ENCODE measurements at regions of chr7 and their contacts with region 1.

Region 1: GRCh38 chr7:115116773-115117715 is 195.2 kb downstream of the MDFIC start:
- DNase-seq: no peak
- ATAC-seq: no peak
- H3K4me3 ChIP-seq: no peak overlapping the region
- H3K27ac ChIP-seq: no peak overlapping the region
- H3K4me1 ChIP-seq: no peaks in the 10 kb centered on the region
- H3K27me3 ChIP-seq: no peaks in the 10 kb centered on the region
- CTCF ChIP-seq: no peak
- POLR2A ChIP-seq: no peak
- RAD21 ChIP-seq: no peak

Region 2: DNA sequence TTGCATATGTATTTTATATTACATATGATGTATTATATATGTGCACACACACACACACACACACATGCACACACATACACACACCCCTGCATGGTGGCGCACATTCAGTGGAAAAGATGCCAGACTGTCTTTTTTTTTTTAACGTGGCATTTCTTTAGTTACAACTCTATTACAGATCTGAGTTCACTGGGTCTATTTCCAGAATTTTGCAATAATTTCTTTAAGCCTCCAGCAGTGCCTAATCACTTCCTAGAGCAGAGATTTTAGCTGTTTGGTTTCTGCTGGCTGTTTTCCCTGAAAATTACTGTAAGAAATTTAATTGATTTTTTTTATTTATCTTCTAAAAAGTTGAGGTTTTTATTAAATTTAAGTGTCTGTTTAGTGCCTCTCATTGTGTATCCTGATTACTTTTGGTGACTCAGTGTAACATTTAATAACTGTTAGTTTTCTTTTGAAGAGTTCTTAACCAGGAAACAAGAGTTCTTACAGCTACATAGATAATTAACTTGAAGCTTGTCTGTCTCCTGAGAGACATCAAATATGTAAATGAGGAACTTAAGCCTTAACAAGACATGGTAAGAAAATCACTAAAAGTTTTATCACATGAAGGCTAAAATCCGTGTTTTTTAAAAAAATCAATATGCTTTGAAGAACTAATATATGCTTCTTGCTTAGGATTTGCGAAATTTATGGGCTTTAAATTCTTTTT is 36.9 kb after region 1 on chr7:
- CTCF ChIA-PET with region 1: no interaction called
- POLR2A ChIA-PET with region 1: no interaction called
- dilution Hi-C with region 1: no loop called
- in situ Hi-C with region 1: no loop called
- intact Hi-C with region 1: loop called (anchors 2 kb)
- DNase-seq: no peak
- ATAC-seq: no peak
- H3K4me3 ChIP-seq: no peak overlapping the region
- H3K27ac ChIP-seq: no peak overlapping the region
- H3K4me1 ChIP-seq: no peaks in the 10 kb centered on the region
- H3K27me3 ChIP-seq: no peaks in the 10 kb centered on the region
- CTCF ChIP-seq: no peak
- POLR2A ChIP-seq: no peak
- RAD21 ChIP-seq: no peak

Region 3: DNA sequence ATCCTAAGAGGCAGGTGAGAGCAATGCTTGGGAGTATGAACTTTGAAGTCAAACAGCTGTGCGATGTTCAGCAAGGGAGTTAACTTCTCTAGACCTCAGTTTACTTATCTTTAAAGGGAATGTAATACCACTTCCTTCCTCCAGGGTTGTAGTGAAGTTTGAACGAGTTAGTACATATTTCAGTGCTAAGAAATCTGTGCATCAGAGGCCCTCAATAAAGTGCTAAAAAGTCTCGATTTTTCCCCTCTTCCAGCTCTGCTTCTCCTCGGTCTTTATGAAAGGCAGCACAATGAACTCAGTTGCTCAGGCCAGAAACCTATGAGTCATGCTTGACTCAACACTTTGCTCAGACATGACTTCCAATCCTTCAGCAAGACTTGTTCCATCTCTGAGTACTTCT is 223.8 kb after region 1 on chr7:
- CTCF ChIA-PET with region 1: no interaction called
- POLR2A ChIA-PET with region 1: no interaction called
- dilution Hi-C with region 1: no loop called
- in situ Hi-C with region 1: no loop called
- intact Hi-C with region 1: no loop called
- DNase-seq: peak; percentile 94
- ATAC-seq: peak; percentile 74
- H3K4me3 ChIP-seq: no peak overlapping the region
- H3K27ac ChIP-seq: no peak overlapping the region
- H3K4me1 ChIP-seq: no peaks in the 10 kb centered on the region
- H3K27me3 ChIP-seq: no peaks in the 10 kb centered on the region
- CTCF ChIP-seq: no peak
- POLR2A ChIP-seq: no peak
- RAD21 ChIP-seq: no peak

Region 4: GRCh38 chr7:115748131-115748738 is 631.2 kb after region 1 on chr7:
- CTCF ChIA-PET with region 1: no interaction called
- POLR2A ChIA-PET with region 1: no interaction called
- dilution Hi-C with region 1: no loop called
- in situ Hi-C with region 1: no loop called
- intact Hi-C with region 1: loop called (anchors 5 kb)
- DNase-seq: peak; percentile 8
- ATAC-seq: no peak
- H3K4me3 ChIP-seq: no peak overlapping the region
- H3K27ac ChIP-seq: no peak overlapping the region
- H3K4me1 ChIP-seq: no peaks in the 10 kb centered on the region
- H3K27me3 ChIP-seq: no peaks in the 10 kb centered on the region
- CTCF ChIP-seq: peak; percentile 41
- POLR2A ChIP-seq: no peak
- RAD21 ChIP-seq: peak; percentile 55